HEK293 (cell line): ENCODE measurements at regions of chr16 and their contacts with region 1.

Region 1: DNA sequence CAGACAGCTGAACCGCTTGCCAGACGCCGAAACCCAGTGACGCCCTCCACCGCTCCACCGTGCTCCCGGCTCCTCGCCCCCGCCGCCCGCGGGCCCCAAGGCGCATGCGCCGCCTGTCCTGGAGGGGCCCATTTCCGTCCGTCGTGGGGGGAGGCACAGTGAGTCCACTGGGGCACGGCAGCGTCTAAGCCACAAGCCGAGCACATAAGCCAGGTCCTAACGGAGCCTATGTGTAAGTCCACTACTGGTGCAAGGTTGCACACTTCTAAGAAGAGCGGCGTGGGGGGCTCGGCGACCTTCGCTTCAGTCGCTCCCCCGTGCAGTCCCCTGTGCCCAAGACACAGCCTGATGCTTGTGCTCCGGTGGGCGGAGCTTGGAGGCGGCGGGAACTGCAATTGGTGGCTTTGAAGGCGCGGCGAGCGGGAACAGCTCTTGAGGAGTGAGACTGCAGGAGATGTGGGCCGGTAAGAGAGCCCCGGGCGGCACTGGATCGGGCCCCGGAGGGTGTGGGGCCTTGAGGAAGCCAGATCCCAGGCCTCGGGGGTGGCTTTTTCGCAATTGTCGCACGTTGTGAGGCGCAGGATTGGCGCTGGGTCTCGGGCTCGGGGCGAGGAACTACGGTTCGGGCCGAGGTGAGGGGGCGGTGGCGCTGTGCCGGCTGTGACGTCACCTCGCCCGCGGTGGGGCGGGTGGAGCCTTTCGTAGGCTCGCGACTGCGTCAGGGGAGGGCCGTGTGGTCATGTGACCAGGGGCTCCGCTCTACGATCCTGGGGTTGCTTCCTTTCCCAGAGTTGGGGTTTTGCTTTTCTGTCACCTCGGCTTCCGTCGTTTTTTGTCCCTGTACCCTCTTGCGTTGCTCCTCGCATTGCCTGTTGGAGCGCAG is at the starts of genes CENPN and CMC2:
- H3K4me3 ChIP-seq: peak within 1 kb of the TSS; percentile 70
- H3K27ac ChIP-seq: peak within 1 kb of the TSS; percentile 86
- H3K4me1 ChIP-seq: 0 out of 2 replicates have a peak, but pooled peaks cover 3% of the 10 kb centered on the region
- CTCF ChIP-seq: peak; percentile 93

Region 2: GRCh38 chr16:80710918-80711317 is 296.1 kb before region 1 on chr16:
- CTCF ChIA-PET with region 1: no interaction called
- POLR2A ChIA-PET with region 1: no interaction called
- H3K4me3 ChIP-seq: no peak overlapping the region
- H3K27ac ChIP-seq: no peak overlapping the region
- H3K4me1 ChIP-seq: peaks cover 4% of the 10 kb centered on the region; the same call in 1 of the 2 replicates
- CTCF ChIP-seq: no peak

Region 3: DNA sequence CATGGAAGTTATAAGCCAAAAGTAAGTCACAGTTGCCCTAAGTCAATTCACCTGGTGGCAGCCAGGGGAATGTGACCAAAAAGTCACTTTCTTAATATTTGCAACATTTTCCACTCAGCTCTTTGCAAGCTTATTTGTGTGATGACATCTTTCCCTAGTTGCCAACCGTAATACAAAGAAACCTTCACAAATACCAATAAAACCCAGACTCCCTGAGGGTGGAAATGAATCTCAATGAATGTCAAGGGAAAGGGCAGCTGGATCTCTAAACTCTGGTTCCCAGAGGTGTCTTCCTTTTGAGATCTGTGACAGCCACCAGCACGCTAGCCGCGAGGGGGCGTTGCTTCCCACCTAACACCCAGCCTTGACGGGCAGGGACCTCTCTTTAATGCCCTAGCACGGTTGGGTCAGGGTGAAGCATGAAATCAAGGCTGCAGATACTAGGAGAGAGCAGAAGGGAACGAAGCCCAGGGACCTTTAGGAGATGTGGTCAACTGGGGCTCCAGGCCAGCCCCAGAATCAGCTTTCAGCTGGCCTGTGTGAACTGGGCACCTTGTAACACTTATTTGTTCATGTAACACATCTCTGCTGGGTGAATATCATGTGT is 82.6 kb before region 1 on chr16:
- CTCF ChIA-PET with region 1: interaction called, 10 read pairs
- POLR2A ChIA-PET with region 1: no interaction called
- H3K4me3 ChIP-seq: no peak overlapping the region
- H3K27ac ChIP-seq: no peak overlapping the region
- H3K4me1 ChIP-seq: no peaks in the 10 kb centered on the region
- CTCF ChIP-seq: peak; percentile 73

Region 4: DNA sequence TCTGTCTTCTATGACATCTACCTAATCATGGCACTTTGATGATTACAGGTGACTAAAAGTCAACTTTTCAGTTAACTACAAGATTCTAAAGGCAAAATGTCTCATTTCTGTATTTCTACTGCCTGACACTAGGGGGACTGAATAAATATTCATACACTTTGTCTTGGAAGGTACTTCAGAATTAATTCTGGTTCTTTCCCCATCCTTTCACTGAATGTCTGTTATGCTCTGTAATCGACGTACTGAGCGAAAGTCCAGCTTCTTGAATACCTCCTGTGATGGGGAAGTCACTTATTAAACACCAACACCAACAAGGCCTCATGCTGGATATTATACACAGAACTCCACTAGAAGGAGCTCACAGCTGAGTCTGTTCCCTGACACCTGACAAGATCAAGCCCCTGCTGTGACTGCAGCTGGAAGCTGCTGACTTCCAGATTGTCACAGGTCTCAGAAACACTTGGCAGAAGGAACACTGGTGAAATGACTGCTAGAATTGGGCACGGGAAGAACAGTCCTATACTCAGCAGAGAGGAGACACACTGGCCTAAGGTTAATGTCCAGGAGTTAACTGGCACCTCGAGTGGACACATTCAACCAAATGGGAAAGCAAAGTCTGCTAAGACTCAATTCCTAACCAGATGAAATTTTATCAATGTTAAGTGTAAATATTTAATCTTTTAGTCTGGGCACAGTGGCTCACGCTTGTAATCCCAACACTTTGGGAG is 32.2 kb before region 1 on chr16:
- CTCF ChIA-PET with region 1: interaction called, 12 read pairs
- POLR2A ChIA-PET with region 1: interaction called, 4 read pairs
- H3K4me3 ChIP-seq: no peak overlapping the region
- H3K27ac ChIP-seq: no peak overlapping the region
- H3K4me1 ChIP-seq: no peaks in the 10 kb centered on the region
- CTCF ChIP-seq: peak; percentile 37

Region 5: GRCh38 chr16:80986557-80986956 is 20.5 kb before region 1 on chr16:
- CTCF ChIA-PET with region 1: interaction called, 11 read pairs
- POLR2A ChIA-PET with region 1: interaction called, 4 read pairs
- H3K4me3 ChIP-seq: no peak overlapping the region
- H3K27ac ChIP-seq: no peak overlapping the region
- H3K4me1 ChIP-seq: peaks cover 23% of the 10 kb centered on the region
- CTCF ChIP-seq: no peak

Region 6: GRCh38 chr16:80993307-80993706 is 13.7 kb before region 1 on chr16:
- CTCF ChIA-PET with region 1: interaction called, 13 read pairs
- POLR2A ChIA-PET with region 1: interaction called, 6 read pairs
- H3K4me3 ChIP-seq: no peak overlapping the region
- H3K27ac ChIP-seq: no peak overlapping the region
- H3K4me1 ChIP-seq: peaks cover 11% of the 10 kb centered on the region
- CTCF ChIP-seq: no peak

Region 7: GRCh38 chr16:81035398-81035974 is 28.4 kb after region 1 on chr16 and contains the start of gene ATMIN:
- CTCF ChIA-PET with region 1: interaction called, 12 read pairs
- POLR2A ChIA-PET with region 1: interaction called, 11 read pairs
- H3K4me3 ChIP-seq: peak within 1 kb of the TSS; percentile 89
- H3K27ac ChIP-seq: peak within 1 kb of the TSS; percentile 76; the same call in 1 of the 2 replicates
- H3K4me1 ChIP-seq: peaks cover 3% of the 10 kb centered on the region; the same call in 1 of the 2 replicates
- CTCF ChIP-seq: peak; percentile 92

Region 8: DNA sequence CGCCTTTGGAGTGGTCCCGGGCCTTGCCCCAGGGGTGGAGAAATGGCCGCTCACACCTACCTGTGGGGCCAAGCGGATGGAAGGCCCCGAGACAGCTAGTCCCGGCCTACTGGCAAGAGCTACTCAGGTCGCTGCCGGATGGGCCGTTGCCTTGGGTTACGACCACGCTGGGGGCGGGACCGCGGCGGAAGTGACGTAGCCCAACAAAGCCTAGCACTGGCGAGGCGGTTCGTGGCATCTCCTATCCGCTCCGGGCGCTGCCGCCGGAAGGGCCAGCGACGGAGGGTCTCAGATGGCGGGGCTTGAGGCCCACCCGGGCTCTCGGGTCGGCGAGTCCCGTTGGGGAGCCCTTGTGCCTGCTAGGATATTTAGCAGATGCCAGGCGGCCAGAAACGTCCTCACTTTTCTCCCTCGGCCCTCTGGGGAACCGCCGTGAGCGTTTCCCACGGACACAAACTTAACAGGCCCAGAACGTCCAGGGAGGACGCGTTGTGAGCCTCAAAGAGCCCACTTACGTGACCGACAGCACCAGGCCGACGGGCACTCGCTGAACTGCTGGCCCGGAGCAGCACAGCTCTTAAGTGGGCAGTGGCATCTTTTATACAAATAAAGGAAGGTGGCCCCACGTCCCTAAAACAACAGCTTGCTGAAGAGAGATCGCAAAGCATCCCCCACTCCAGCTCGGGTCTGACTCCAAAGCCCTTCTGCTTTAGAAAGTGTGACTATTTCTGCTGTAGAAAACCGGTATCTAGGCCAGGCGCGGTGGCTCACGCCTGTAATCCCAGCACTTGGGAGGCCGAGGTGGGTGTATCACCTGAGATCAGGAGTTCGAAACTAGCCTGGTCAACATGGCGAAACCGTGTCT is 70.3 kb after region 1 on chr16 and contains the start of gene C16orf46:
- CTCF ChIA-PET with region 1: no interaction called
- POLR2A ChIA-PET with region 1: interaction called, 12 read pairs
- H3K4me3 ChIP-seq: peak within 1 kb of the TSS; percentile 82
- H3K27ac ChIP-seq: peak within 1 kb of the TSS; percentile 90
- H3K4me1 ChIP-seq: no peaks in the 10 kb centered on the region
- CTCF ChIP-seq: no peak

Region 9: GRCh38 chr16:81127051-81127450 is 120.0 kb after region 1 on chr16:
- CTCF ChIA-PET with region 1: no interaction called
- POLR2A ChIA-PET with region 1: no interaction called
- H3K4me3 ChIP-seq: no peak overlapping the region
- H3K27ac ChIP-seq: no peak overlapping the region
- H3K4me1 ChIP-seq: no peaks in the 10 kb centered on the region
- CTCF ChIP-seq: no peak

Region 10: GRCh38 chr16:81140930-81141780 is 134.1 kb after region 1 on chr16:
- CTCF ChIA-PET with region 1: no interaction called
- POLR2A ChIA-PET with region 1: no interaction called
- H3K4me3 ChIP-seq: no peak overlapping the region
- H3K27ac ChIP-seq: no peak overlapping the region
- H3K4me1 ChIP-seq: no peaks in the 10 kb centered on the region
- CTCF ChIP-seq: no peak